Ascending aorta (tissue), 2 donors: ENCODE measurements at regions of chr9 and their contacts with region 1.

Region 1: DNA sequence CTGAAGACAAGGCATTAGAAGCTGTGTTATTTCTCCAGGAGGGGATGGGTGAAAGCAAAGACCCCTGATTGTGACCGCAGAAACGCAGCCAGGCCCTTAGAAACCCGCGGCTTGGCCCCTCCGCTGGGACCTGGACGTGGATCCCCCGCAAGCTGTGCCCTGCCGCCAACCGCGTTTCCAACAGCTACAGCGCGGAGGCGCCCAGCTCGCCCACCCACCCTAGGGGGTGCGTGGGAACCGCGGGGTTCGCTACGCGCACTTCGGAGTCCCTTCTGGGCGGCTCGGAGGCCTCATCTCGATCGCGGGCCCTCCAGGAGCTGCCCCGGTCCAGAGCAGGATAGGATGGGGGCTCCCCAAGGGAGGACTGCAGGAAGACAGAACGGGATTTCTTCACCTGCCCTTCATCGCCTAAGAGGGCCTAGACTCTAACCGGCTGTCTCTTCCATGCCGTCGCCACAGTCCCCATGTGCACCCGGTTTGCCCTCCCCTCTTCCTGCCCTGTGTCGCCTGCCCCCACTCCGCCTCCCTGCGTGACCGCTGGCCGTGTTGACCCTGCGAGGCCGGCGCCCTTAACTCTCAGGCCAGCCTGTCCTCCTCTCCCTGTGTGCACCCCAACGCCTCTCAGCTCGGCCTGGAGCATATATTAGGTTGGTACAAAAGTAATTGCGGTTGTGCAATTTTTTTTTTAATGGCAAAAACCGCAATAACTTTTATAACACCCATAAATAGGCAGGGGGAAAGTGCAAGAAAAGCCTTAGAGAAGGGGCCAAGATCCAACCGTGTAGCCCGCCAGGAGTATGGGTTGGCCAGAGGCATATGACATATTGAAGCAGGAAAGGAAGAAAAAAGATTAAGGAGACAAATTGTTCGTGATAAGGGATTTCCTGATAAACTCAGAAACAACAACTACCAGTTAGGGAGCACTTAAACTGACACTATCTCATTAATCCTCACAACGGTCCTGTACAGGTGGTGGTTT is 68.1 kb upstream of the FREM1 start:
- DNase-seq: no peak
- H3K4me3 ChIP-seq: no peak overlapping the region
- H3K27ac ChIP-seq: no peak overlapping the region
- H3K4me1 ChIP-seq: no peaks in the 10 kb centered on the region
- H3K27me3 ChIP-seq: no peaks in the 10 kb centered on the region
- CTCF ChIP-seq: no peak

Region 2: DNA sequence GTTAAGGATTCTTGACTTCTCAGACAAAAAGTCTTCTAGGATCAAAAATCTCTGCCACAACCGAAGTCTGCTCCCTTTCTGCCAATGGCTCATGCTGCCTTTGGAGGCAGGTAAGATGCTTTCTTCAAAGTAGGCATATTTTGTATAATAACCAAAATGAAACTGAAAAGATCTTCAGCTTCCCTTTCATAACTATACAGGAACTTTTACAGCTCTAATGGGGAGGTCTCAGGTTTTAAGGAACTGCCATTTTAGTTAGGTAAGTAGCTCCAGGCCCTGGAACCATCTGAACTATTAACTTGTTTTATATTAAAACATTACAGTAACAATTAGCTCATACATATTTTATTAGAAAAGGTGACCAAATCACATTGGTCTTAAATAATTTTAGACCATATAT is 42.8 kb after region 1 on chr9:
- intact Hi-C with region 1: loop called (anchors 10 kb)
- DNase-seq: no peak
- H3K4me3 ChIP-seq: no peak overlapping the region
- H3K27ac ChIP-seq: no peak overlapping the region
- H3K4me1 ChIP-seq: no peaks in the 10 kb centered on the region
- H3K27me3 ChIP-seq: no peaks in the 10 kb centered on the region
- CTCF ChIP-seq: no peak